ENCODE measurements at regions of chr10 and their contacts with region 1.

Region 1: DNA sequence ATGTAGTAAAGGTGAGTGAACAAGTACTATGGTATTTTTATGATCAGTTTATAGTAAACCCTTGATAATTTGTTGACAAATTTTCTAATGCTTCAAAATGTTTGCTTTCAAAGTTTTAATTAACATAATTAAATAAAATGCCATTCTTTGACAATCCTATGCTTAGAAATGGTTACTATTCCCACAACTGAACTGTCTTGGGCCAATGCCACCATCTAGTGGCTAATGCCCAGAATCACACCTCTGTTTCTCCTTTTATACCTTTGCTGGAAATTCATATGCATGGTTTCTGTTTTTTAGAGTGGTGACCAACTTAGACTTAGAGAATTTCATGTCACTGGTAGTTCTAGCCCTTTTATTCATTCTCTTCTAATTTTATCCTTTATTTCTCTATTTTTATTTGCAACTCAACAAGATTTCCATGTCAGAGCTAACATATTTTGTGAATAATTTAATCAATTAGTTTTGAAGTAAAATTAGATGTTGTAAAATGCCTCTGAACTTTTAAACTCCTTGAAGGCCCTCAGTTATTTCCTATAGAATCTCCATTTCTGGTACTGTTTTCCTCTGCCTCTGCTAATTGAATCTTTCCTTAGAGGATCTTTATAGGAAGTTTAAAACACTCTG is 31.1 kb downstream of the PCGF5 start:
- DNase-seq: peak; percentile 42
- H3K4me3 ChIP-seq: no peak overlapping the region
- H3K27ac ChIP-seq: no peak overlapping the region
- H3K27me3 ChIP-seq: no peaks in the 10 kb centered on the region
- CTCF ChIP-seq: peak; percentile 85

Region 2: DNA sequence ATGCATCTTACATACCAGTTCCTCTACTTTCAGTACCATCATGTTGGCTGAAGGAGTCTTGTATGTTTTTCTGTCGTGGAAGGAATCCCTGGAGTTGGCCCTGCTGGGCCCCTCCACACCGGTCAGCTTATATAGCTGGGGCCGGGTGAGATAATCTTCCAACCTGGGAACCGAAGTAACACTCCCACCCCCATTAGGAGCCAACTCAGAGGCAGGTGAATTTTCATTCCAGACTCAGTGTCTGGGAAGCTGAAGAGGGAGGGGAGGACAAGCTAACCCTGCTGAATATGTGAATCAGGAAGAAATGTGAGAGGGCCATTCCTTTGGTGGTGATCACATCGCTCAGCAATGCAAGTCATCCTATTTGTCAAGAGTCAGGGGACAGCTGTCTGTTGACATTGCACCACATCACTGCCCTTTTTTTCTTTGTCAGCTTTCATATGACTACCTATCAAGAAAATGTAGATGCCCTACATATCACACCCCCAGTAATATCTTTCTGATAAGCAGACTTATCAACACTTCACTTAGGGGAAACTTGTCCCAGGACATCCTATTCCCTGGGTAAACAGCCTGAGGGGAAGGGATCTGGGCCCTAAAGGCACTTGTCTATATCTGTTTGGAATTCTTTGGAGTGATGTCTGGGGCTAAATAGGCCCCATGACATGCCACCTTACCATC is 330.4 kb before region 1 on chr10 and contains the start of gene ANKRD1:
- in situ Hi-C with region 1: loop called (anchors 25 kb)
- DNase-seq: peak; percentile 95
- H3K4me3 ChIP-seq: peak within 1 kb of the TSS; percentile 53
- H3K27ac ChIP-seq: peak within 1 kb of the TSS; percentile 59
- H3K27me3 ChIP-seq: no peaks in the 10 kb centered on the region
- CTCF ChIP-seq: no peak

Region 3: DNA sequence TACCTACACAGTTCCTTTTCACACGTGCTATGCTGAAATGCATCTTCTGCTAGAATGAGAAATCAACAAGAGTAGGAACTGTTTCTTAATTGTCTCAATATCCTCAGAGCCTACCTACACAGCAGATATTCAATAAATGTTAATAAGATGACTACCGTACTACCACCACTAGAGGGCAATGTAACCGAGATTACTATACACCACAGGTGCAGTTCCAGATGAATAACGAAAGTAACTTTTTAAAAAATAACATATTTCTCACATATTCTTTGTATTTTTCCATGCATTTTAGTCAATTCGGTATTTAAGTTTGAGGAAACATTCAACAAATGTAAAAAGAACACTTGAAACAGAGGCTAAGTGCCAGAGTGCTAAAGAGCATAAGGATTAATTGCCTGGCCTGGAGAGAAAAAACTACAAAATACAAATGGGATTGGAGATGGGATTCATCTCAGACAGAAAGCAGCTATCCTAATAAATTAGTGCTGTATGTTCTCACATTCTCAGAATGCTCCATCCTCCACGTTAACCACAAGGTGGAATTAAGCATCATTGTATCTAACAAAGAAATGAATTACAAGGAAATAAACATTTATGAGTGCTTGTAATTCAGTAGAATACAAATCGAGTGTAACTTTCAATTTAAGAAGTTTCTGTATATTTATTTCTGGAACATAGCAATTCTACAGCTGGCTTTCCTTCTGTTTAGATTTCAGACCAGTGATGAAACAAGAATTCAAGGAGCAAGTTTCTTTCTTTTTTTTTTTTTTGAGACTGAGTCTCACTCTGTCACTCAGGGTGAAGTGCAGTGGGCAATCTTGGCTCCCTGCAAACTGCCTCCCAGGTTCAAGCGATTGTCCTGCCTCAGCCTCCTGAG is 138.3 kb after region 1 on chr10:
- in situ Hi-C with region 1: no loop called
- DNase-seq: peak; percentile 38
- H3K4me3 ChIP-seq: no peak overlapping the region
- H3K27ac ChIP-seq: no peak overlapping the region
- H3K27me3 ChIP-seq: no peaks in the 10 kb centered on the region
- CTCF ChIP-seq: no peak

Measured in brain microvascular endothelial cell (primary cell).